ENCODE measurements at regions of chr14 and their contacts with region 1.

Region 1: DNA sequence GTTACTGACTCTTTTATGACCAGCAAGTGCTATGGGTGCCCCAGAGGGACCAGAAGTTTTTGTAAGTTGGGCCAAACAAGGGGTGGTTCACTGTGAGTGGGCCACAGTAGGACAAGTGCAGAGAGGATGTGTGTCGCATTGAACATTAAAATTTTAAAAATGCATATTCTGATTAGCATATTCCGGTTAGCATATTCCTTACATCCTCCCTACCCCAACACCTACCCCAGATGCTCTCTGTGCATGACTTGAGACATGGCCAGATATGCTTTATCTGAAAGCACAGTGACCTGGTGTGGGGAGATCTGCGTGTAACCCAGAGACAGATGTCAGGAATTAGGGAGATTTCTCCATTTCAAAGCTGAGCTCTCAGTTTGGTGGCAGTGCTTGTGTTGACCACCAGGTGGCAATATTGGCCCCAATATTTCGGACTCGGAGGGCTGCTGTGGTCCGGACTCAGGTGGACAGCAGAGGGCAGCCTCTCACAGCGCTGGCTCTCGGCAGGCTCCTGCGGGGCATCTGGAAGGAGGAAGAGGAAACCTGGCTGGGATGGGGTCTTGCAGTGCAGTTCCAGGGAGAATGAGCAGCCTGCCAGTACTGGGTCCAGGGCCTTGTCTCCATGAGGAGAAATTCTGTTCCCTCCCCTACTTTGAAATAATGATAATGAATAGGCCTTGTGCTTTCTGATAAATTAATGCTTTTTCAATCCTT is 1.6 kb upstream of the CEBPE start:
- DNase-seq: peak; percentile 87 to 90
- ATAC-seq: peak; percentile 71 to 92 (median 88)
- H3K4me3 ChIP-seq: no peak overlapping the region
- H3K27ac ChIP-seq: peak overlapping the region in 5 of 10 donors; percentile 0 to 80 (median 10)
- H3K4me1 ChIP-seq: peaks cover 0 to 49% (median 7%) of the 10 kb centered on the region in 9 donors
- H3K27me3 ChIP-seq: peaks cover 0 to 6% (median 0%) of the 10 kb centered on the region in 7 donors
- CTCF ChIP-seq: peak in 8 of 9 donors; percentile 100

Region 2: GRCh38 chr14:23006544-23007419 is 113.9 kb before region 1 on chr14:
- intact Hi-C with region 1: no loop called
- DNase-seq: peak; percentile 94 to 98
- ATAC-seq: peak; percentile 99 to 100 (median 99)
- H3K4me3 ChIP-seq: peak overlapping the region; percentile 53 to 91 (median 75)
- H3K27ac ChIP-seq: peak overlapping the region; percentile 86 to 98 (median 96)
- H3K4me1 ChIP-seq: peaks cover 3 to 39% (median 25%) of the 10 kb centered on the region in 9 donors
- H3K27me3 ChIP-seq: no peaks in the 10 kb centered on the region
- CTCF ChIP-seq: peak in 4 of 9 donors; percentile 32 to 50 (median 42)

Region 3: GRCh38 chr14:23141671-23142451 is 21.2 kb after region 1 on chr14:
- intact Hi-C with region 1: no loop called
- DNase-seq: peak; percentile 73 to 80
- ATAC-seq: peak; percentile 83 to 97 (median 92)
- H3K4me3 ChIP-seq: no peak overlapping the region
- H3K27ac ChIP-seq: peak overlapping the region; percentile 15 to 79 (median 62)
- H3K4me1 ChIP-seq: peaks cover 0 to 31% (median 13%) of the 10 kb centered on the region in 9 donors
- H3K27me3 ChIP-seq: no peaks in the 10 kb centered on the region
- CTCF ChIP-seq: no peak

Region 4: DNA sequence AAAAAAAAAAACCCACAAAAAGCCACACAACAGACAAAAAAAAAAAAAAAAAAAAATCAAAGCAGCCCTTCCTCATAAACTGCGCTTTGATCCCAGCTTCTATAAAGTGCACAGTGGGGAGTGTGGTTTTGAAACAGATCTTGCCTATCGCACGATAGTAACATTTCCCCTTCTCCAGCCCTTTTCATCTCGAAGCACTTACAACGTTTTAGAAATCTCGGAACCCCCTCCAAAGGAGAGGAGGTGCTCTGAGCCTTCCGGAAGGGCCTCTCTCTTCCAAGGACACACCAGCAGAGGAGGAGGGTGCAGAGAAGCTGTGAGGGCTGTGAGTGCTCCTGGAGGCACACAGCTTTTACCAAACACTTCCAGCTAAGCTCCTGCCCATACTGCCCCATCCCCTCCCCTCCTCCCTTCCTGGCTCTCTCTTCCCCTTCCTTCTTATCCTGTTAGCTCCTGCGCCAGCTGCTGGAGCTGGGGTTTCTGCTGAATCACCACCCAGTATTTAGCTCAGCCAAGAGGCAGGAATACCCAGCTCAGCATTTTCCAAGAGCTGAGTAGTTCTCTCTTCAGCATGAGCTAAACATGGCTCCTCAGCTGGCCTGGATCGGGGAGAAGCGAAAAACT is 34.4 kb after region 1 on chr14:
- intact Hi-C with region 1: loop called in 1 of 10 experiments (anchors 5 kb)
- DNase-seq: peak; percentile 71 to 80
- ATAC-seq: peak; percentile 75 to 89 (median 86)
- H3K4me3 ChIP-seq: peak overlapping the region in 7 of 10 donors; percentile 4 to 46 (median 32)
- H3K27ac ChIP-seq: peak overlapping the region; percentile 80 to 97 (median 90)
- H3K4me1 ChIP-seq: peaks cover 4 to 44% (median 26%) of the 10 kb centered on the region in 9 donors
- H3K27me3 ChIP-seq: no peaks in the 10 kb centered on the region
- CTCF ChIP-seq: peak in 1 of 9 donors; percentile 16

Region 5: DNA sequence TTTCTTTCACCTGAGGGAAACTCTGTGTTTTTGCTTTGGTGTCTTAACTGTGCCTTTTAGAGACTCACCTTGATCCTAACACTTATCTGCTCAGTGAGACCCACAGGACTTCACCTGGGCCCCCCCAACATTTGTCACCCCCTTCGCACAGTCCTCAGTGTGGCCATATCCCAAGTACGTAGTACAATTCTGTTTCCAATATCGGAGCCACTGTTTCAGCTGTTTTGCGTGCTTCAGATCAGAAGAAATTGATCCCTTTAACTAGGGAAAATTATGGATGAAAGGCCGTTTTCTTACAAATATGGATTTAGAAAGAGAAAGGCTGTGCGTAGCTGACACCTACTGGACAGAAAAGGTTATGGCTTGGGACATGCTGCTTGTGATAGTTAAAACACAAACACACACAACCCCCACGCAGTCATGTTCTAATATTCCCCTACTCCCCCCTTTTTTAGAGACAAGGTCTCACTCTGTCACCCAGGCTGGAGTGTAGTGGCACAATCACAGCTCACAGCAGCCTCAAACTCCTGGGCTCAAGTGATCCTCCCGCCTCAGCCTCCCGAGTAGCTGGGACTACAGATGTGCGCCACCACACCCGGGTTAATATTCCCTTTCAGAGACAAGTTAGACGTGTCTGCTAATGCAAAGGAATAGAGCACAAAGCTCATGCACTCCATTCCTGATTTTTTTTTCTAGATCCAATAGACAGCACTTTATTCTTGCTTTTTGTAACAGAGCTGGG is 66.4 kb after region 1 on chr14:
- intact Hi-C with region 1: loop called (anchors 1 to 2 kb)
- DNase-seq: peak in 1 of 2 donors; percentile 38
- ATAC-seq: peak in 7 of 8 donors; percentile 51 to 70 (median 62)
- H3K4me3 ChIP-seq: no peak overlapping the region
- H3K27ac ChIP-seq: no peak overlapping the region
- H3K4me1 ChIP-seq: peaks cover 0 to 21% (median 2%) of the 10 kb centered on the region in 9 donors
- H3K27me3 ChIP-seq: peaks cover 0 to 10% (median 3%) of the 10 kb centered on the region in 7 donors
- CTCF ChIP-seq: peak; percentile 55 to 88 (median 73)

Region 6: DNA sequence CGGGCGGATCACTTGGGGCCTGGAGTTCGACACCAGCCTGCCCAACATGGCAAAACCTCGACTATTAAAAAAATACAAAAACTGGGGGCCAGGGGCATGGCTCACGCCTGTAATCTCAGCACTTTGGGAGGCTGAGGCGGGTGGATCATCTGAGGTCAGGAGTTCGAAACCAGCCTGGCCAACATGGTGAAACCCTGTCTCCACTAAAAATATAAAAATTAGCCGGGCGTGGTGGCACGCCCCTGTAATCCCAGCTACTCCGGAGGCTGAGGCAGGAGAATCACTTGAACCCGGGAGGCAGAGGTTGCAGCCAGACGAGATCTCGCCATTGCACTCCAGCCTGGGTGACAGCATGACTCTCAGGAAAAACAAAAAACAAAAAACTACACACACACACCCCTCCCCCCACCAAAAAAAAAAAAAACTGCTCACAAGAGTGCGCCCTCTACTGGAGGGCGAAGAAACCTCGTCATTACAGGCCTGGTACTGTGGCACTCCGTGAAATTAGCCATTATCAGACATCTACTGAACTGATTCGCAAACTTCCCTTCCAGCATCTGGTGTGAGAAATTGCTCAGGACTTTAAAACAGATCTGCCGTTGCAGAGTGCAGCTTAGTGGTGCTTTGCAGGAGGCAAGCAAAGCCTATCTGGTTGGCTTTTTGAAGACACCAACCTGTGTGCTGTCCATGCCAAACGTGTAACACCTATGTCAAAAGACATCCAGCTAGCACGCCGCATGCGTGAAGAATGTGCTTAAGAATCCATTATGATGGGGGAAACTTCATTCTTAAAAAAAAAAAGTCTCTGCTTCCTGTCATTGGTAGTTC is 174.3 kb after region 1 on chr14:
- intact Hi-C with region 1: loop called in 7 of 10 experiments (anchors 5 to 10 kb)
- DNase-seq: peak in 1 of 2 donors; percentile 28
- ATAC-seq: peak; percentile 36 to 83 (median 68)
- H3K4me3 ChIP-seq: peak overlapping the region in 1 of 10 donors; percentile 25
- H3K27ac ChIP-seq: peak overlapping the region in 1 of 10 donors; percentile 4
- H3K4me1 ChIP-seq: peaks cover 0 to 40% (median 30%) of the 10 kb centered on the region in 9 donors
- H3K27me3 ChIP-seq: no peaks in the 10 kb centered on the region
- CTCF ChIP-seq: peak; percentile 76 to 90 (median 85)

Region 7: GRCh38 chr14:23301288-23301968 is 180.7 kb after region 1 on chr14:
- intact Hi-C with region 1: loop called in 7 of 10 experiments (anchors 5 to 10 kb)
- DNase-seq: peak; percentile 97 to 99
- ATAC-seq: peak; percentile 83 to 92 (median 88)
- H3K4me3 ChIP-seq: peak overlapping the region; percentile 66 to 94 (median 81)
- H3K27ac ChIP-seq: peak overlapping the region; percentile 94 to 100 (median 98)
- H3K4me1 ChIP-seq: peaks cover 7 to 52% (median 41%) of the 10 kb centered on the region in 9 donors
- H3K27me3 ChIP-seq: no peaks in the 10 kb centered on the region
- CTCF ChIP-seq: peak; percentile 51 to 94 (median 75)

Region 8: DNA sequence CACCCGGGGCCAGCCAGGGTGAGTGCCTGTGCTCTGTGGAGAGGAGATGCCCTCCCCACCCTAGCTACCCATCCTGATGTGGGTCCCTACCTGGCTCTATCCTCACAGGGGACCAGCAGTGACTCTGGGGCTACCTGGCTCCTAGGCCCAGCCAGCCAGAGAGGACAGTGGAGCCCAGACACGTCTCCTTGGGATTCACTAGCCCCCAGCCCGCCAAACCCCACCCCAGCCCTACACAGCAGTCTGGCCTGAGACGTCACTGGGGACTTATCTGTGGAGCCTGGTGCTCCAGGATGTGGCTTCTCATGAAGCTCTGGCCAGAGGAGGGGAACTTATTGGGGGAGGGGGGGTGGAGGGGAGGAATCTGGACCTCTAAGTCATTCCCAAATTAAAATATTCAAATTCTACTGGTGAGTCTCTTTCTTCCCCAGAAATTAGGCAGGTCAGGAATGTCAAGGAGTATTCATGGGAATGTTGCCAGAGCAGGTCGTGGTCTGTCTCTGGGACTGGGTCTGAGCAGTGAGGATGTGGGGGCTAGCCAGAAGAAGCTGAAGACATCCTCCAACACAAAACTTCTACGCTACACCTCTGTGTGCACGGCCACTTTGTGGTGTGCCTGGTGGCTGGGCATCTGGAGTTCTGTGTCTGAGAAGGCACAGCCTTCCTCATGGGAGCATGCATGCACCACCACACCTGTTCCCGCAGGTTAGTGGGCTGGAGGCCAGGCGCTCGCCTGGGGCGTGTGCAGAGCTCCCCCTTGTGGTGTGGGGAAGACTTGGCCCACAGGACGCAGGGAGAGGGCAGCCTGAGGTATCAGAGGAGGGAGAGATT is 258.9 kb after region 1 on chr14:
- intact Hi-C with region 1: no loop called
- DNase-seq: peak in 1 of 2 donors; percentile 65
- ATAC-seq: peak; percentile 7 to 56 (median 42)
- H3K4me3 ChIP-seq: no peak overlapping the region
- H3K27ac ChIP-seq: peak overlapping the region in 1 of 10 donors; percentile 16
- H3K4me1 ChIP-seq: peaks cover 0 to 44% (median 8%) of the 10 kb centered on the region in 9 donors
- H3K27me3 ChIP-seq: peaks cover 0 to 7% (median 0%) of the 10 kb centered on the region in 7 donors
- CTCF ChIP-seq: peak; percentile 65 to 89 (median 85)

Measured in heart right ventricle (tissue), 16 donors.